ENCODE measurements at regions of chr10 and their contacts with region 1.

Region 1: GRCh38 chr10:126895214-126895781 is 9.9 kb upstream of the DOCK1 start:
- DNase-seq: no peak
- ATAC-seq: no peak
- H3K4me3 ChIP-seq: no peak overlapping the region
- H3K27ac ChIP-seq: no peak overlapping the region
- H3K4me1 ChIP-seq: peaks cover 0 to 4% (median 0%) of the 10 kb centered on the region in 9 donors
- H3K27me3 ChIP-seq: no peaks in the 10 kb centered on the region
- CTCF ChIP-seq: no peak

Region 2: DNA sequence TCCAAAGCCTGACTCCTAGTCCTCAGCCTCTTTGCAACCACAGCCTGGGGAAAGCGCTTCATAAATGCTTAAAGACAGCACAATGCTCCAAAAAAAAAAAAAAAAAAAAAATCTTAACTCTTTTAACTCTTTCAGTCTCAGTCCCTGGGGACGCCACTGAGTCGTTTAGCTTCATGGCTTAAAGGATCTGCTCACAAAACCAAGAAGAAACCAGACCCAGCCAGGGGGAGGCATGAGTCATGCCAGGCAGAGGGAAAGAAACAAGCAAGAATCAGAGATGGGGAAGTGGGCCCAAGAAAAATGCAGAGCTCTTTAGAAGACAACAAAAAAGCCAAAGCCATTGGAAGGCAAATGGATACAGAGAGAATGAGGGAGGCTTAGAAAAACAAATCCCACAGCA is 22.5 kb before region 1 on chr10:
- intact Hi-C with region 1: loop called in 1 of 10 experiments (anchors 2 kb)
- DNase-seq: no peak
- ATAC-seq: no peak
- H3K4me3 ChIP-seq: no peak overlapping the region
- H3K27ac ChIP-seq: no peak overlapping the region
- H3K4me1 ChIP-seq: no peaks in the 10 kb centered on the region
- H3K27me3 ChIP-seq: peaks cover 0 to 17% (median 6%) of the 10 kb centered on the region in 7 donors
- CTCF ChIP-seq: no peak

Region 3: DNA sequence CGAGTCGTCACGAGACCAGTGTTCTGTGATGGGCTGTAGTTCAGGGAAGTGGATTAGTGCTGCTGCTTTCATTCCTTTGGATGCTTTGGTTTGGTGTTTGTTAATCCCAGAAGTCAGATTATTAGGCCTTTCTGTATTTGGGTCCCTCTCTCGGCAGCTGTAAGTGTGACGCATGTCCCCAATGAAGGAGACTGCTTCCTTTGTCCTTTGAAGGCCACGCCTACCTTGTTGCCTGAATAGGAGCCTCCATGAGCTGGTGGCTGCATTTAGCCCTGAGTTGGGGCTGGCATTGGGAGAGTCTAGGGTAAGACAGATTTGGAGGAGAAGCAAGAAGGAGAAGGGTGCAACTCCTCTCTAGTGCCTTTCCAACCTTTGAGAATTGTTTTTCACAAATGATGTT is 44.4 kb after region 1 on chr10:
- intact Hi-C with region 1: no loop called
- DNase-seq: no peak
- ATAC-seq: peak in 2 of 8 donors; percentile 25 to 61
- H3K4me3 ChIP-seq: no peak overlapping the region
- H3K27ac ChIP-seq: no peak overlapping the region
- H3K4me1 ChIP-seq: peaks cover 0 to 19% (median 8%) of the 10 kb centered on the region in 9 donors
- H3K27me3 ChIP-seq: no peaks in the 10 kb centered on the region
- CTCF ChIP-seq: no peak